Heart left ventricle (tissue), 16 donors: ENCODE measurements at regions of chr5 and their contacts with region 1.

Region 1: GRCh38 chr5:143128412-143129071 is 274.9 kb downstream of the NR3C1 start:
- DNase-seq: no peak
- ATAC-seq: peak in 2 of 4 donors; percentile 21 to 27
- H3K4me3 ChIP-seq: no peak overlapping the region
- H3K27ac ChIP-seq: peak overlapping the region in 10 of 12 donors; percentile 1 to 78 (median 38)
- H3K4me1 ChIP-seq: peaks cover 3 to 84% (median 63%) of the 10 kb centered on the region in 12 donors
- H3K27me3 ChIP-seq: no peaks in the 10 kb centered on the region
- CTCF ChIP-seq: no peak
- POLR2A ChIP-seq: no peak

Region 2: GRCh38 chr5:143057580-143057999 is 71.0 kb before region 1 on chr5:
- intact Hi-C with region 1: loop called in 1 of 10 experiments (anchors 2 kb)
- DNase-seq: no peak
- ATAC-seq: no peak
- H3K4me3 ChIP-seq: no peak overlapping the region
- H3K27ac ChIP-seq: peak overlapping the region in 5 of 12 donors; percentile 22 to 65 (median 46)
- H3K4me1 ChIP-seq: peaks cover 0 to 63% (median 36%) of the 10 kb centered on the region in 12 donors
- H3K27me3 ChIP-seq: no peaks in the 10 kb centered on the region
- CTCF ChIP-seq: no peak
- POLR2A ChIP-seq: no peak

Region 3: DNA sequence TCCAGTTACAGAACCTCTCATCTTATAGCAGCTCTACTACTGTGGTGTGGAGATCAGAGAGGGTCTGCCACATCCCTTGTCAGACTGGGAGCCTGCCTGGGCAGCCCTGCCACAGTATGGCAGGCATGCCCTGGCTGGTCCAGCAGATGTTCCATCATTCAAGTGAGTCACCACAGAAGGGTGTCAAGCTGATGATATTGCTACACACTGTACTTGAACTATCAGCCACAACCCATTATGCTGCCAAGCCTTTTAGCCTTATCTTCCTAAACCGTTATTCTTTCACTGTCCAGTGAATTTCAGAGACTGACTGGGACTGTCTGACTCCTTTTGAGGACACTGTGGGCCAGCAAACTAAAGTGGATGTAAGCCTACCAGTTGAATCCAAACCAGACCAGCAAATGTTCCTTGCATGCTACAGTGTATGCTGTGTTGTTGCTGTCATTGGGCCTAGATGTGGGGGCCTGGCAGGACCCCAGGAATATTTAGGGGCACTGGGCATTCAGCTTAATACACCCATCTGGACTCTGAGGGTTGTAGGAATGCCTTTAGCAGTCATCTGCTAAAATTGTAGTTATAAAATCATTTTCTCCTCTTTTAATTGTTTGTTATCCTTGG is 72.3 kb after region 1 on chr5:
- intact Hi-C with region 1: loop called in 1 of 10 experiments (anchors 5 kb)
- DNase-seq: peak in 4 of 5 donors; percentile 56 to 73 (median 68)
- ATAC-seq: peak; percentile 96 to 99 (median 98)
- H3K4me3 ChIP-seq: no peak overlapping the region
- H3K27ac ChIP-seq: peak overlapping the region in 7 of 12 donors; percentile 19 to 58 (median 45)
- H3K4me1 ChIP-seq: peaks cover 0 to 61% (median 33%) of the 10 kb centered on the region in 12 donors
- H3K27me3 ChIP-seq: no peaks in the 10 kb centered on the region
- CTCF ChIP-seq: no peak
- POLR2A ChIP-seq: no peak

Region 4: GRCh38 chr5:143213851-143214363 is 85.4 kb after region 1 on chr5:
- intact Hi-C with region 1: loop called in 2 of 10 experiments (anchors 5 kb)
- DNase-seq: no peak
- ATAC-seq: peak in 2 of 4 donors; percentile 26 to 62
- H3K4me3 ChIP-seq: no peak overlapping the region
- H3K27ac ChIP-seq: peak overlapping the region in 10 of 12 donors; percentile 32 to 79 (median 63)
- H3K4me1 ChIP-seq: peaks cover 0 to 64% (median 27%) of the 10 kb centered on the region in 12 donors
- H3K27me3 ChIP-seq: no peaks in the 10 kb centered on the region
- CTCF ChIP-seq: no peak
- POLR2A ChIP-seq: no peak